ENCODE measurements at regions of chr6 and their contacts with region 1.

Region 1: GRCh38 chr6:116461932-116462885 is 1.0 kb downstream of the CALHM6 start:
- DNase-seq: peak; percentile 54
- H3K4me3 Mint-ChIP-seq: peak overlapping the region; percentile 56
- H3K27ac Mint-ChIP-seq: no peak overlapping the region
- H3K4me1 Mint-ChIP-seq: peaks cover 20% of the 10 kb centered on the region
- H3K27me3 Mint-ChIP-seq: peaks cover 22% of the 10 kb centered on the region

Region 2: DNA sequence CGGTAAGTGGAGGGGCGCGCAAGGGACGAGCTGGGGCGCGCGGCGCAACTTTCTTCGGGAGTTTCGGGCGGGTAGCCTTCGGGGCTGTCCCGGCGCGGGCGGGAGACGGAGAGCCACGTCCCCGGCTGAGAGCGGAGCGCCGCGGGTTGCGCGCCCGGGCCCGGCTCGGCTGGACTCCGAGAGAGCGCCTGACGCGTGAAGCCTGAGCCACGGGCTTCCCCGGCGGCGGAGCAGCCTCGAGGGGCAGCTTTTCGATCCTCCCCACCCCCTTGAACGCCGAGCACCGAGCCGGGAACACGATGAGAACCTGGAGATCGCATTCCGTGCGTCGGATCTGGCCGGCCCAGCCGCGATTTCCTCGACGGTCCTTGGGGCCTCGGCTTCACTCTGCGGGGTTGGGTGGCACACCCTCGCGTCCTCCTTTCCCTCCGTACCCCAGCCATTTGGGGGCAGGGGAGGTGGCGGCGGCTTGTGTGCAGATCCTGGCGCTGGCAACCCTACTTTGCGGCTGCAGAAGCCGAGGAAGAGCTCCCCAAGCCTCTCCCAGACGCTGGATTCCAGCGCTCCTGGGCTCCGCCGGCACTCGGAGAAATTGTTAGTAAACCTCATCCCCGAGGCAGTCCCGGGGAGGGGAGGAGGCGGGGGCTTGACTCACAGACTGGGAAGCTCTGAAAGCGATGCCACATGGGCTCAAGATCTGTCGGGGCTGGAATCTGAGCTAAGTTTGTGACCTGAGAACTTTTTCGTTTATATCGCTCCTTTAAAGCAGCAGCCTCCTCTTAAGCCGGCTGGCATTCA is 90.9 kb before region 1 on chr6:
- CTCF ChIA-PET with region 1: no interaction called
- intact Hi-C with region 1: loop called (anchors 5 kb)
- DNase-seq: peak; percentile 43
- H3K4me3 Mint-ChIP-seq: peak overlapping the region; percentile 71
- H3K27ac Mint-ChIP-seq: no peak overlapping the region
- H3K4me1 Mint-ChIP-seq: peaks cover 8% of the 10 kb centered on the region
- H3K27me3 Mint-ChIP-seq: peaks cover 24% of the 10 kb centered on the region

Region 3: DNA sequence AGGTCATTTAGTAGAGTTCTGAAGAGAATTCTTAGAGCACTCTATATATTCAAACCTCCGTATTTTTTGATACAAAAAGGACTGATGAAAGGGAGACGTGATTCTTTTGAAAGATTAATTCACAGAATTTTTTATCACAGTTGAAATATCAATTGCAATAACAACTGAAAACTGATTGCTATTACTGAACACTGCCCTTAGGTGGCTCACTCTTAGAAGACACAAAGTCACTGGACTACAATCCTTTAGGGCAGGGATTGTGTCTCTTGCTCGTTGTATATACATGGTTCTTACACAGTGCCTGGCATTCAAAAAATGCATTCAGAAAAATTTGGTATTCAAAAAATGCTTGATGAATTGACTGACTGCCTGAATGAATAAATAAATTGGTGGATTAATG is 18.1 kb before region 1 on chr6:
- CTCF ChIA-PET with region 1: interaction called, 5 read pairs
- intact Hi-C with region 1: loop called (anchors 1 kb)
- DNase-seq: no peak
- H3K4me3 Mint-ChIP-seq: no peak overlapping the region
- H3K27ac Mint-ChIP-seq: no peak overlapping the region
- H3K4me1 Mint-ChIP-seq: peaks cover 2% of the 10 kb centered on the region
- H3K27me3 Mint-ChIP-seq: peaks cover 16% of the 10 kb centered on the region

Region 4: DNA sequence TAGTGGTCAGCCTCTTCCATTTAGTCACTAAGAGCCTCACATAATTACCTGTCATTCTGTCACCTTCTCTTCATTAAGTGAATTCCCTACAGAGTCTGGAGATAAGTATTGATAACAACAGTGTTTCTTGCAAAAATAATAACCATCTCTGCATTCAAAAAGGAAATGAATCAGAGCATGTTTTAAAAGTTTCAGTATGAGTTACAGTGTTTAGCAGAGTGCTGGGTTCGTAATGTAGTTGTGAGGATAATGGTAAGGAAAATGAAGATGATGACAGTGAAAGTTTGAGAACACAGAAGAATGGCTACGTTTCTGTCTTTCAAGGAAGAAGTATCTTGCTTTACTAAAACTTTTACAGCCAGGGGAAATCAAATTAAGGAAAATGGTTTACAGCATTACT is 335.4 kb after region 1 on chr6:
- CTCF ChIA-PET with region 1: no interaction called
- intact Hi-C with region 1: no loop called
- DNase-seq: no peak
- H3K4me3 Mint-ChIP-seq: no peak overlapping the region
- H3K27ac Mint-ChIP-seq: no peak overlapping the region
- H3K4me1 Mint-ChIP-seq: no peaks in the 10 kb centered on the region
- H3K27me3 Mint-ChIP-seq: no peaks in the 10 kb centered on the region